ENCODE measurements at regions of chr6 and their contacts with region 1.

Region 1: DNA sequence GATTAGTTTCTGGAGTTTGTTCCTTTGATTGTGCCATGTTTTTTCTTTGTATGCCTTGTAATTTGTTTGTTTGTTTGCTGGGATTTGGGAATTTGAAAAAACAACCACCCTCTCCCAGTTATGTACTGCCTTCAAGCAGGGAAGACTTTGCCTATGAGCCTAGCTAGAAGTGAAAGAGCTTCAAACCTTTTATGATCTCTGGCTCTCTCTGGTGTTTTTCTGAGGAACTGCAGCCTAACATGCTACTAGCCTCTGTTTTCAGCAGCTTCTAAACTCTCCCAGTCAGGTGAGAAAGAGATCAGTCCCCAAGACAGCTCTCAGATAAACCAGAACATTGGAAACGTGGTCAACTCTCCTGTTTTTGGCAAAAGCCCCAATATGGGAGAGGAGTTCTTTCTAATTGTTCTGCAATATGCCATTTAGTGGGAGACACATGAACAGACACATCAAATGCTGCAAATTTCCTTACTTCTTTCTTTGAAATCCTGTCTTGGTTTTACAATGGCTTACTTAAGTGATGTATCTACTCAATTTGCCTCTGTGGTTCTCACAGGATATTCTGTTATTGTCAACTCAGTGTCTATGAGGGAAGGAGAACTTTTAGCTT is 58.9 kb upstream of the SERINC1 start:
- DNase-seq: peak; percentile 27
- ATAC-seq: peak; percentile 96
- H3K4me3 ChIP-seq: no peak overlapping the region
- H3K27ac ChIP-seq: no peak overlapping the region
- H3K4me1 ChIP-seq: no peaks in the 10 kb centered on the region
- H3K27me3 ChIP-seq: no peaks in the 10 kb centered on the region
- CTCF ChIP-seq: peak; percentile 89 to 94 (median 90)
- EP300 ChIP-seq: no peak
- POLR2A ChIP-seq: no peak
- RAD21 ChIP-seq: peak; percentile 96

Region 2: DNA sequence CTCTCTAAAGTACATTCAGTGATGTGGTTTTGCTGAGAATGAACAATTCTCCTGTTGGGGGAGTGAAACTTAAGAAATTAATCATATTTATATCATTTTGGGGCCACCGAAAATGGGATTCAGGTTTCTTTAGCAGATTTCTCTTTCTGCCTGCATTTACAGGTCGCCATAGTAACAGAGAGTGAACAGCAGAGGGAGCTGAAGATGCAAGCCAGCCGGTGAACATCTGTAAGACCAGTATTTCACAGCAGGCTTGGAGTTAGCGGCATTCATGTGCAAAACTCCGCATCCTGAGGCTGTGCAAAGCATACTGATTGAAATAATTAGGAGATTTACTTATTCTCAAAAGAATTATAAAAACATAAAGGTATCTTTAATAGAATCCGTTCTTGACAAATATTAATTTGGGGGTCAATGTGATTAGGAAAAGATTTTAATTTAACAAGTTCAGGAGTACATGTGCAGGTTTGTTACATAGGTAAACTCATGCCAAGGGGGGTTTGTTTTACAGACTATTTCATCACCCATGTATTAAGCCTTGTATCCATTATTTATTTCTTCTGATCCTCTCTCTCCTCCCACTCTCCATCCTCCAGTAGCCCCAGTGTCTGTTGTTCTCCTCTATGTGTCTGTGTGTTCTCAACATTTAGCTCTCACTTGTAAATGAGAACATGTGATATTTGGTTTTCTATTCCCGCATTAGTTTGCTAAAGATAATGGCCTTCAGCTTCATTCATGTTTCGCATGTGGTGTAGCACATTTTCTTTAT is 148.9 kb before region 1 on chr6:
- CTCF ChIA-PET with region 1: interaction called, 83 read pairs
- POLR2A ChIA-PET with region 1: no interaction called
- RAD21 ChIA-PET with region 1: interaction called, 28 read pairs
- SMC1A ChIA-PET with region 1: interaction called, 60 read pairs
- in situ Hi-C with region 1: loop called (anchors 5 kb)
- intact Hi-C with region 1: loop called (anchors 1 kb)
- DNase-seq: peak; percentile 7
- ATAC-seq: peak; percentile 95
- H3K4me3 ChIP-seq: no peak overlapping the region
- H3K27ac ChIP-seq: no peak overlapping the region
- H3K4me1 ChIP-seq: no peaks in the 10 kb centered on the region
- H3K27me3 ChIP-seq: no peaks in the 10 kb centered on the region; a peak in 1 of 4 replicates
- CTCF ChIP-seq: peak; percentile 74 to 82 (median 80)
- EP300 ChIP-seq: no peak
- POLR2A ChIP-seq: no peak
- RAD21 ChIP-seq: peak; percentile 83

Region 3: DNA sequence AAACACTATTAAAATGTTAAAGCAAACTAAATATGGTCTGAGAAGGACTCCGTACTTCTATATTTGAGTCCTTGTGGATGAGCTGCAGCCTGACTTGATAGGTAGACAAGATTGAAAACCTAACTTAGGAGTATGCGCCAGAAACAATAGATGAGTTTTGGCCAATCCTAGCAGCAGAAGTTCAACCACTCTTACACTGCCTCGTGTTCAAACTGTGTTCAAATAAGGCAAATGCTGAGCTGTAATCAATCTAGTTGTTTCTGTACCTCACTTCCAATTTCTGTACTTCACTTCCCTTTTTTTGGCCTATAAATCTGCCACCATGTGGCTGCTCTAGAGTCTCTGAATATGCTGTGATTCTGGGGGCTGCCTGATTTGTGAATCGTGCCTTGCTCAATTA is 45.8 kb before region 1 on chr6:
- CTCF ChIA-PET with region 1: interaction called, 277 read pairs
- POLR2A ChIA-PET with region 1: no interaction called
- RAD21 ChIA-PET with region 1: interaction called, 115 read pairs
- SMC1A ChIA-PET with region 1: interaction called, 168 read pairs
- in situ Hi-C with region 1: no loop called
- intact Hi-C with region 1: no loop called
- DNase-seq: no peak
- ATAC-seq: peak; percentile 94
- H3K4me3 ChIP-seq: no peak overlapping the region
- H3K27ac ChIP-seq: no peak overlapping the region
- H3K4me1 ChIP-seq: no peaks in the 10 kb centered on the region
- H3K27me3 ChIP-seq: no peaks in the 10 kb centered on the region
- CTCF ChIP-seq: peak; percentile 21 to 24 (median 22); a peak in 3 of 6 replicates
- EP300 ChIP-seq: no peak
- POLR2A ChIP-seq: no peak
- RAD21 ChIP-seq: peak; percentile 34; the same call in 1 of the 2 replicates

Region 4: GRCh38 chr6:122511193-122511924 is 19.2 kb before region 1 on chr6:
- CTCF ChIA-PET with region 1: interaction called, 36 read pairs
- POLR2A ChIA-PET with region 1: no interaction called
- RAD21 ChIA-PET with region 1: interaction called, 5 read pairs
- SMC1A ChIA-PET with region 1: interaction called, 11 read pairs
- in situ Hi-C with region 1: no loop called
- intact Hi-C with region 1: no loop called
- DNase-seq: no peak
- ATAC-seq: no peak
- H3K4me3 ChIP-seq: no peak overlapping the region
- H3K27ac ChIP-seq: no peak overlapping the region
- H3K4me1 ChIP-seq: no peaks in the 10 kb centered on the region
- H3K27me3 ChIP-seq: no peaks in the 10 kb centered on the region
- CTCF ChIP-seq: no peak
- EP300 ChIP-seq: no peak
- POLR2A ChIP-seq: no peak
- RAD21 ChIP-seq: no peak

Region 5: GRCh38 chr6:122568797-122569661 is 38.5 kb after region 1 on chr6:
- CTCF ChIA-PET with region 1: interaction called, 22 read pairs
- POLR2A ChIA-PET with region 1: no interaction called
- RAD21 ChIA-PET with region 1: interaction called, 3 read pairs
- SMC1A ChIA-PET with region 1: interaction called, 8 read pairs
- in situ Hi-C with region 1: no loop called
- intact Hi-C with region 1: no loop called
- DNase-seq: no peak
- ATAC-seq: peak; percentile 27
- H3K4me3 ChIP-seq: no peak overlapping the region
- H3K27ac ChIP-seq: no peak overlapping the region
- H3K4me1 ChIP-seq: no peaks in the 10 kb centered on the region
- H3K27me3 ChIP-seq: no peaks in the 10 kb centered on the region
- CTCF ChIP-seq: no peak
- EP300 ChIP-seq: no peak
- POLR2A ChIP-seq: no peak
- RAD21 ChIP-seq: no peak

Region 6: DNA sequence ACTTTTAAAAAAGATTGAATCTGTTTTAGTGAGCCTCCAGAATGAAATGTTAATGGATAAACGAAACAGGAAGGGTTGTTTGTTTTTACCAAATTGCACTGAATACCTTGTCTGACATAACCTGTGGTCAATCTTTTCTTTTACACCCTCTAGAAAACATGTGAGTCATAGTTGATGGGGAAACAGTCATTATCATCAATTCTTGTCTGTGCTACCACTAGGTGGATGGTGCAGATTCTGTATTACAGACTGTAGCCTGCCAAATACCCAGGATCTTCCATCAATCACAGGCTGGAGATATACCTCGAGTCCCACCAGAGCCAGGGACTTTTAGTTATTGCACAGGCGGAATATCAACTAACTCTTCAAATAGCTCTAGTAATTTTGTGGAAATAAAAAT is 50.2 kb after region 1 on chr6:
- CTCF ChIA-PET with region 1: no interaction called
- POLR2A ChIA-PET with region 1: no interaction called
- RAD21 ChIA-PET with region 1: no interaction called
- SMC1A ChIA-PET with region 1: no interaction called
- in situ Hi-C with region 1: no loop called
- intact Hi-C with region 1: no loop called
- DNase-seq: no peak
- ATAC-seq: peak; percentile 50
- H3K4me3 ChIP-seq: no peak overlapping the region
- H3K27ac ChIP-seq: no peak overlapping the region
- H3K4me1 ChIP-seq: no peaks in the 10 kb centered on the region
- H3K27me3 ChIP-seq: no peaks in the 10 kb centered on the region
- CTCF ChIP-seq: no peak
- EP300 ChIP-seq: no peak
- POLR2A ChIP-seq: no peak
- RAD21 ChIP-seq: no peak